Pancreas (tissue), 10 donors: ENCODE measurements at regions of chr1 and their contacts with region 1.

Region 1: DNA sequence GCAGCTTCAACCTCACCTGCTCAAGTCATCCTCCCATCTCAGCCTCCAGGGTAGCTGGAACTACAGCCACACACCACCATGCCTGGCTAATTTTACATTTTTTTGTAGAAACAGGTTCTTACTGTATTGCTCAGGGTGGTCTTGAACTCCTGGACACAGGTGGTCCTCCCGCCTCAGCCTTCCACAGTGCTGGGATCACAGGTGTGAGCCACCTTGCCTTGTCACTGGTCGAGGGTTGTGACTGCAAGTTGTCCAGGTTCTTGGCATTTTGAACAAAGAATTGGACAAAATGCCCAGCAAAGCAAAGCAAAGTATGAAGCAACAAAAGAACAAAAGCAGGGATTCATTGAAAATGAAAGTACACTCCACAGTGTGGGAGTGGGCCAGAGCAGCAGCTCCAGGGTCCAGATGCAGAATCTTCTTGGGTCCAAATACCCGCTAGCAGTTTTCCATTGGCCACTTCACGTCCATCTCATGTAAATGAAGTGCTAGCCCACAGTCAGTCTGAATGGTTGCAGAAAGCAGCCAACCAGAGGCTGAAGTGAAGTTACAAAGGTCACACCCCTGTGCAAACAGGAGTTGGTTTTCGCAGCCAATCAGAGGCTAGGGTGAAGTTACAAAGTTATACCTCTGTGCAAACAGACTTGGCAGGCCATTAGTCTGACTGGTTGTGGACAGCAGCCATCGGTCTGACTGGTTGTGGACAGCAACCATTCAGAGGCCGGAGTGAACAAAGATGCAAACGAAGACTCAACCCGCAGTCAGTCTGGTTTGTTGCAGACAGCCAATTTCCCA is 109.5 kb upstream of the KIF26B start:
- DNase-seq: peak in 3 of 6 donors; percentile 38 to 55 (median 54)
- ATAC-seq: peak; percentile 51 to 74 (median 72)
- H3K4me3 ChIP-seq: peak overlapping the region in 1 of 4 donors; percentile 2
- H3K27ac ChIP-seq: peak overlapping the region; percentile 33 to 59 (median 52)
- H3K4me1 ChIP-seq: peaks cover 3 to 12% (median 10%) of the 10 kb centered on the region in 3 donors
- H3K27me3 ChIP-seq: no peaks in the 10 kb centered on the region
- CTCF ChIP-seq: no peak

Region 2: GRCh38 chr1:244796718-244797406 is 248.4 kb before region 1 on chr1:
- intact Hi-C with region 1: loop called in 2 of 3 experiments (anchors 5 kb)
- DNase-seq: peak in 4 of 6 donors; percentile 38 to 74 (median 42)
- ATAC-seq: peak; percentile 69 to 94 (median 86)
- H3K4me3 ChIP-seq: no peak overlapping the region
- H3K27ac ChIP-seq: no peak overlapping the region
- H3K4me1 ChIP-seq: no peaks in the 10 kb centered on the region
- H3K27me3 ChIP-seq: no peaks in the 10 kb centered on the region
- CTCF ChIP-seq: peak; percentile 78 to 85 (median 84)